GM12878 (cell line): ENCODE measurements at regions of chr2 and their contacts with region 1.

Region 1: DNA sequence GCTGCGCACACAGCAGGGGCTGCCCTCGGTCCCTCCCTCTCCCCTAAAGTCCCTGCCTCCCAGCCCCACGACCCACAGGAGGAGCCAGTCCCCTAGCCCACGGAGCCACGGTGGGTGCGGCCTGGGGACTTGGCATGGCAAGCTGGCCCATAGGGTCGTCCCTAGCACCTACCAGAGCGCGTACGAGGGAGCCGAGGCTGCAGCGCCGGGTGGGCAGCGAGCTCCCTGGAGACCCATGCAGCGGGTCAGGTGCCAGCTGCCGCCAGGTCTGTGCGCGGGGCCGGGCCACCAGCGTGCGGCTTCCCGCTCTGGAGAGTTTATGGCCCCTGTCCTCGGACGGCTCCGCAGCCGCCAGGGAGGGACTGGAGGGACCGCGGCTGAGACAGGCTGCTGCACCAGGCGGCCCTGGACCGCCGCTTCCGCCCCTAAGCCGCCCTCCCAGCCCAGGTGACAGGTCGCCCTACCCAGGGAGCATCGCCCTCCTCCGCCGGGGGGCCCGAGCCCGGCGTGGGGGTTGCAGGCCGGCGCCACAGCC is 273.6 kb downstream of the CCDC74A start:
- DNase-seq: no peak
- ATAC-seq: no peak
- H3K4me3 ChIP-seq: no peak overlapping the region
- H3K27ac ChIP-seq: no peak overlapping the region
- H3K4me1 ChIP-seq: no peaks in the 10 kb centered on the region
- H3K27me3 ChIP-seq: no peaks in the 10 kb centered on the region; a peak in 1 of 4 replicates
- CTCF ChIP-seq: no peak
- EP300 ChIP-seq: no peak
- POLR2A ChIP-seq: no peak
- RAD21 ChIP-seq: no peak

Region 2: GRCh38 chr2:131475831-131476230 is 325.4 kb before region 1 on chr2 and contains the start of gene TUBA3D:
- CTCF ChIA-PET with region 1: no interaction called
- POLR2A ChIA-PET with region 1: no interaction called
- RAD21 ChIA-PET with region 1: no interaction called
- SMC1A ChIA-PET with region 1: no interaction called
- in situ Hi-C with region 1: no loop called
- intact Hi-C with region 1: no loop called
- DNase-seq: no peak
- ATAC-seq: no peak
- H3K4me3 ChIP-seq: no peak within 1 kb of the TSS
- H3K27ac ChIP-seq: no peak within 1 kb of the TSS
- H3K4me1 ChIP-seq: no peaks in the 10 kb centered on the region
- H3K27me3 ChIP-seq: no peaks in the 10 kb centered on the region
- CTCF ChIP-seq: no peak
- EP300 ChIP-seq: no peak
- POLR2A ChIP-seq: no peak
- RAD21 ChIP-seq: no peak
- polyA plus RNA-seq, gene TUBA3D: 0.04 to 0.08 TPM

Region 3: GRCh38 chr2:131682122-131682944 is 118.9 kb before region 1 on chr2:
- CTCF ChIA-PET with region 1: interaction called, 6 read pairs
- POLR2A ChIA-PET with region 1: no interaction called
- RAD21 ChIA-PET with region 1: interaction called, 15 read pairs
- SMC1A ChIA-PET with region 1: interaction called, 4 read pairs
- in situ Hi-C with region 1: loop called (anchors 10 kb)
- intact Hi-C with region 1: no loop called
- DNase-seq: no peak
- ATAC-seq: peak; percentile 98
- H3K4me3 ChIP-seq: peak overlapping the region; percentile 88
- H3K27ac ChIP-seq: peak overlapping the region; percentile 62
- H3K4me1 ChIP-seq: no peaks in the 10 kb centered on the region; the same call in 1 of the 2 replicates
- H3K27me3 ChIP-seq: no peaks in the 10 kb centered on the region
- CTCF ChIP-seq: peak; percentile 23 to 30 (median 24); a peak in 4 of 6 replicates
- EP300 ChIP-seq: no peak
- POLR2A ChIP-seq: peak; percentile 96
- RAD21 ChIP-seq: no peak

Region 4: GRCh38 chr2:131816831-131817230 is 15.6 kb after region 1 on chr2:
- CTCF ChIA-PET with region 1: no interaction called
- POLR2A ChIA-PET with region 1: no interaction called
- RAD21 ChIA-PET with region 1: no interaction called
- SMC1A ChIA-PET with region 1: no interaction called
- in situ Hi-C with region 1: no loop called
- intact Hi-C with region 1: no loop called
- DNase-seq: no peak
- ATAC-seq: no peak
- H3K4me3 ChIP-seq: no peak overlapping the region
- H3K27ac ChIP-seq: no peak overlapping the region
- H3K4me1 ChIP-seq: no peaks in the 10 kb centered on the region
- H3K27me3 ChIP-seq: no peaks in the 10 kb centered on the region
- CTCF ChIP-seq: no peak
- EP300 ChIP-seq: no peak
- POLR2A ChIP-seq: no peak
- RAD21 ChIP-seq: no peak